Activated CD4-positive, alpha-beta T cell treated with anti-CD3 and anti-CD28 coated beads, Interleukin-2, amount 10 ng/mL, durations not matched to agents 24 days and 14 days (primary cell): ENCODE measurements at regions of chr14 and their contacts with region 1.

Region 1: DNA sequence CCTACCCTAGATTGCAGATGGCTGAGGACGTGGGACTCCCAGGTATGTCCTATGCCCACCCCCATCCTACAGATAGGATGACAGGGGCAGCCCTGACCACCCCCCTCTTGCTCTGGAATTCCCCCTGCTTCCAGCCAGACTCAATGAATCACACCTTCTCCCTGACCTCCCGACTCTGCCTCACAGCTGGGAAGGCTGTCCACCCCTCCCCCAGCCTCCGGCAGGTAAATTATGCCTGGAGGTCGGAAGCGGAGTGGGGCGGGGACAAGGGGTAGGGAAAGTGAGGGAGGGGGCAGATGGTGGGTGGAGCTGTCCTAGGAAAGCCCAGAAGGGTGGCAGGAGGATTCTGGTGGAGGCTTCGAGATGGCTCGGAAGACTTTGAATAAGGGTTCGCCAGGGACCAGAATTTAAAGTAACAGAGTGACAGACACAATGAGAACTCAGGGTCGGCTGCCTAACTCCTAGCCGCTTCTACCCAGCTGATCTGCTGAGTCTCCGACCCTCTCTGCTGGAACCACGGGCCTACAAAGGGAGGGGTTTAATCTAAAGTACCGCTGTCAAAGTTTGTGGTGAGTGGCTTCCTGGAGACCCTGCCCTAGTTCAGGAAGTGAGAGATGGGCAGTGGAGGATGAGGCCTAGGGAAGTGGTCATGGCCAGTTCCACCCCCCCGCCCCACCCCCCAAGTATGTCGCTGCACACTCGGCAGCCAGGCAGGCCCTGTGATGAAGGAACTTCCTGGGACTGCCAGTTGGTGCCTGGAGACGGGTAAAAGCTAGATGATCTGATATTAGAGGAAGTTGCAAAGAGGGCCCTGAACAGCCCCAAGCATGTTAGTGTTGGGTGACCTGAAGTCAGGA is 4.2 kb downstream of the PLEKHG3 start:
- DNase-seq: peak; percentile 89
- H3K4me3 Mint-ChIP-seq: peak overlapping the region; percentile 72
- H3K27ac Mint-ChIP-seq: peak overlapping the region; percentile 38
- H3K4me1 Mint-ChIP-seq: peaks cover 46% of the 10 kb centered on the region
- H3K27me3 Mint-ChIP-seq: peaks cover 43% of the 10 kb centered on the region

Region 2: GRCh38 chr14:64645220-64645892 is 63.0 kb before region 1 on chr14:
- intact Hi-C with region 1: no loop called
- DNase-seq: no peak
- H3K4me3 Mint-ChIP-seq: no peak overlapping the region
- H3K27ac Mint-ChIP-seq: no peak overlapping the region
- H3K4me1 Mint-ChIP-seq: no peaks in the 10 kb centered on the region
- H3K27me3 Mint-ChIP-seq: peaks cover 31% of the 10 kb centered on the region

Region 3: GRCh38 chr14:64723691-64724577 is 15.6 kb after region 1 on chr14:
- intact Hi-C with region 1: loop called (anchors 2 kb)
- DNase-seq: no peak
- H3K4me3 Mint-ChIP-seq: peak overlapping the region; percentile 53
- H3K27ac Mint-ChIP-seq: peak overlapping the region; percentile 39
- H3K4me1 Mint-ChIP-seq: peaks cover 65% of the 10 kb centered on the region
- H3K27me3 Mint-ChIP-seq: peaks cover 1% of the 10 kb centered on the region